Activated B cell treated with CpG ODN at 0.5 μM for 24 hours (primary cell): ENCODE measurements at regions of chr22 and their contacts with region 1.

Region 1: GRCh38 chr22:40385036-40385782 is 14.8 kb downstream of the SGSM3 start:
- DNase-seq: no peak
- ATAC-seq: peak; percentile 96
- H3K4me3 Mint-ChIP-seq: peak overlapping the region; percentile 82
- H3K27ac Mint-ChIP-seq: peak overlapping the region; percentile 95
- H3K4me1 Mint-ChIP-seq: peaks cover 68% of the 10 kb centered on the region
- H3K27me3 Mint-ChIP-seq: no peaks in the 10 kb centered on the region
- CTCF ChIP-seq: no peak

Region 2: GRCh38 chr22:40289991-40290459 is 95.2 kb before region 1 on chr22:
- CTCF ChIA-PET with region 1: no interaction called
- POLR2A ChIA-PET with region 1: no interaction called
- intact Hi-C with region 1: no loop called
- DNase-seq: no peak
- ATAC-seq: peak; percentile 83
- H3K4me3 Mint-ChIP-seq: no peak overlapping the region
- H3K27ac Mint-ChIP-seq: peak overlapping the region; percentile 9
- H3K4me1 Mint-ChIP-seq: peaks cover 12% of the 10 kb centered on the region
- H3K27me3 Mint-ChIP-seq: no peaks in the 10 kb centered on the region
- CTCF ChIP-seq: no peak

Region 3: GRCh38 chr22:40396882-40397281 is 11.7 kb after region 1 on chr22:
- CTCF ChIA-PET with region 1: interaction called, 5 read pairs
- POLR2A ChIA-PET with region 1: interaction called, 11 read pairs
- intact Hi-C with region 1: loop called (anchors 1 kb)
- DNase-seq: no peak
- ATAC-seq: no peak
- H3K4me3 Mint-ChIP-seq: peak overlapping the region; percentile 28
- H3K27ac Mint-ChIP-seq: peak overlapping the region; percentile 80
- H3K4me1 Mint-ChIP-seq: peaks cover 86% of the 10 kb centered on the region
- H3K27me3 Mint-ChIP-seq: no peaks in the 10 kb centered on the region
- CTCF ChIP-seq: no peak

Region 4: GRCh38 chr22:40415531-40416266 is 30.5 kb after region 1 on chr22:
- CTCF ChIA-PET with region 1: interaction called, 6 read pairs
- POLR2A ChIA-PET with region 1: interaction called, 5 read pairs
- intact Hi-C with region 1: loop called (anchors 1 kb)
- DNase-seq: no peak
- ATAC-seq: peak; percentile 48
- H3K4me3 Mint-ChIP-seq: peak overlapping the region; percentile 75
- H3K27ac Mint-ChIP-seq: peak overlapping the region; percentile 91
- H3K4me1 Mint-ChIP-seq: peaks cover 80% of the 10 kb centered on the region
- H3K27me3 Mint-ChIP-seq: no peaks in the 10 kb centered on the region
- CTCF ChIP-seq: no peak

Region 5: GRCh38 chr22:40620464-40621046 is 235.3 kb after region 1 on chr22:
- CTCF ChIA-PET with region 1: no interaction called
- POLR2A ChIA-PET with region 1: no interaction called
- intact Hi-C with region 1: no loop called
- DNase-seq: no peak
- ATAC-seq: no peak
- H3K4me3 Mint-ChIP-seq: no peak overlapping the region
- H3K27ac Mint-ChIP-seq: no peak overlapping the region
- H3K4me1 Mint-ChIP-seq: peaks cover 30% of the 10 kb centered on the region
- H3K27me3 Mint-ChIP-seq: no peaks in the 10 kb centered on the region
- CTCF ChIP-seq: no peak

Region 6: GRCh38 chr22:40651563-40652501 is 266.6 kb after region 1 on chr22:
- CTCF ChIA-PET with region 1: interaction called, 7 read pairs
- POLR2A ChIA-PET with region 1: interaction called, 11 read pairs
- intact Hi-C with region 1: no loop called
- DNase-seq: peak; percentile 42
- ATAC-seq: peak; percentile 90
- H3K4me3 Mint-ChIP-seq: peak overlapping the region; percentile 83
- H3K27ac Mint-ChIP-seq: peak overlapping the region; percentile 88
- H3K4me1 Mint-ChIP-seq: peaks cover 12% of the 10 kb centered on the region
- H3K27me3 Mint-ChIP-seq: no peaks in the 10 kb centered on the region
- CTCF ChIP-seq: no peak